Activated CD4-positive, alpha-beta memory T cell treated with anti-CD3 and anti-CD28 coated beads, Interleukin-2, amount 10 ng/mL, durations not matched to agents 7 days and 5 days (primary cell): ENCODE measurements at regions of chr16 and their contacts with region 1.

Region 1: GRCh38 chr16:2980227-2981086 is at the start of gene PKMYT1:
- DNase-seq: peak; percentile 95
- H3K4me3 Mint-ChIP-seq: peak within 1 kb of the TSS; percentile 88
- H3K27ac Mint-ChIP-seq: peak within 1 kb of the TSS; percentile 80
- H3K4me1 Mint-ChIP-seq: peaks cover 41% of the 10 kb centered on the region
- H3K27me3 Mint-ChIP-seq: peaks cover 2% of the 10 kb centered on the region
- total RNA-seq, gene PKMYT1: 118 to 124 TPM

Region 2: DNA sequence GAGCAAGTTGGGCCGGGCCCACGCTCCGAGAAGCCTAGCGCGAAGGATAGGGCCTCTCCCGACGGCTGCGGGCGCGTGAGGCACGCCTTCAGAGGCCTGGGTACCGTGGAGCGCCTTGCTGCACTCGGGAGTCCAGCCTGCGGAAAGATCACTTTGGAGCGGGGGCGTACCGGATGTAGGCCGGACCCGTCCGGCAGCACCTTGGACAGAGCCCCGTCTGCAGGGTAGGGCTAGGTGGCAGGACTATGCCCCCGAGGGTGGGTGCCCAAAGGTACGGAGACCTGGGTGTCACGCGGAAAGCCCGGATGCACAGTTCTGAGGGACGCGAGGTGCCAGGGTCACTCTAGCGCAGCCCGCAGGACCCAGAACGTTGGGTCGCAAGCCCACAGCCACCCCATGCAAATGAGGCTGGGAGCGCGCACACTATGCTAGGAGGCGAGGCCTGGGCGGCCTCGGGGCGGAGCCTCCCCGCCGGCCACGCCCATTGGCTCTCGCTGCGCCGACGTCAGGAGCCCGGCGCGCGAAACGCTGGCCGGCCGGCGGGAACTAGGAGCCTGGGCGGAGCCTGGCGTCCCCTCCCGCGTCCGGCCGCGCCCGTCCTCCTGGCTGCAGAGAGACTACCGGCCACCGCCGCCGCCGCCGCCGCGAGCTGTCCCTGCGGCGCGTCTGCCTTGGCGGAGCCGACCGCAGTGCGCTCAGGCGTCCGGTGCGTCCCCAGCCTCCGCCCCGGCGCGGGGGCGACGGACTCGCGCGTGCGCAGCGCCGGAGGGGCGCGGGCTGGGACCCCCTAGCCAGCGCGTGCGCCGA is 11.5 kb before region 1 on chr16 and contains the start of gene PAQR4:
- CTCF ChIA-PET with region 1: interaction called, 31 read pairs
- POLR2A ChIA-PET with region 1: interaction called, 107 read pairs
- DNase-seq: peak; percentile 88
- H3K4me3 Mint-ChIP-seq: peak within 1 kb of the TSS; percentile 76
- H3K27ac Mint-ChIP-seq: peak within 1 kb of the TSS; percentile 71
- H3K4me1 Mint-ChIP-seq: peaks cover 42% of the 10 kb centered on the region
- H3K27me3 Mint-ChIP-seq: peaks cover 23% of the 10 kb centered on the region
- total RNA-seq, gene PAQR4: 50.0 to 52.3 TPM

Region 3: GRCh38 chr16:3003582-3004302 is 23.3 kb after region 1 on chr16:
- CTCF ChIA-PET with region 1: interaction called, 11 read pairs
- POLR2A ChIA-PET with region 1: interaction called, 12 read pairs
- DNase-seq: peak; percentile 98
- H3K4me3 Mint-ChIP-seq: peak overlapping the region; percentile 72
- H3K27ac Mint-ChIP-seq: peak overlapping the region; percentile 16
- H3K4me1 Mint-ChIP-seq: peaks cover 33% of the 10 kb centered on the region
- H3K27me3 Mint-ChIP-seq: peaks cover 18% of the 10 kb centered on the region